Adrenal gland (tissue), 19 donors: ENCODE measurements at regions of chr9 and their contacts with region 1.

Region 1: DNA sequence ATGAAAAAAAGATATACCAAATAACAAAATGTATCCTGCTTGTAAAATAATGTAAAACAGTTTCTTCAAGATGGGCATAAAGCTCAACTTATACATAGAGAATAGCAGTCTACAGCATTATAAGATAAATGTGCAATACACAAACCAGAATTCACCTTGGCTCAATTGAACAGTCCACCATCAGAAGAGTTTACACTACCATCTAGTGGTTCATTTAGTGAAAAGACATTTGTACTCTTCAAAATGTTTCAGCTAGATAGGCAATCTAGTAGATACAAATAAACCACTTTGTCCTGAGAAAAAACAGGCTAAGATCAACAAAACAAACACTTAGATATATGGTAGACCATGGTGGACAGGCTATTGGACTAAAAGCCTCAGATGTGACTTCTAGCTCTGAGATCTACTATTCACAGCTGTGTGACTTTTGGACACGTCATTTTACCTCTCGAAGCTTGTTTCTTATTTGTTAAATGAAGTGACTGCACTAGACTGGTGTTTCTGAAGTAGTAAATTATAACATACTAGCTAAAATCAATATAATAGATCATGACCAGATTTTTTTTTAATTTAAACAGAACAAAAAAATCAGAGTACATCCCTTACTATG is 22.1 kb upstream of the TPD52L3 start:
- DNase-seq: no peak
- H3K4me3 ChIP-seq: no peak overlapping the region
- H3K27ac ChIP-seq: no peak overlapping the region
- H3K4me1 ChIP-seq: no peaks in the 10 kb centered on the region
- H3K27me3 ChIP-seq: no peaks in the 10 kb centered on the region
- CTCF ChIP-seq: peak; percentile 32 to 82 (median 66)
- POLR2A ChIP-seq: no peak

Region 2: DNA sequence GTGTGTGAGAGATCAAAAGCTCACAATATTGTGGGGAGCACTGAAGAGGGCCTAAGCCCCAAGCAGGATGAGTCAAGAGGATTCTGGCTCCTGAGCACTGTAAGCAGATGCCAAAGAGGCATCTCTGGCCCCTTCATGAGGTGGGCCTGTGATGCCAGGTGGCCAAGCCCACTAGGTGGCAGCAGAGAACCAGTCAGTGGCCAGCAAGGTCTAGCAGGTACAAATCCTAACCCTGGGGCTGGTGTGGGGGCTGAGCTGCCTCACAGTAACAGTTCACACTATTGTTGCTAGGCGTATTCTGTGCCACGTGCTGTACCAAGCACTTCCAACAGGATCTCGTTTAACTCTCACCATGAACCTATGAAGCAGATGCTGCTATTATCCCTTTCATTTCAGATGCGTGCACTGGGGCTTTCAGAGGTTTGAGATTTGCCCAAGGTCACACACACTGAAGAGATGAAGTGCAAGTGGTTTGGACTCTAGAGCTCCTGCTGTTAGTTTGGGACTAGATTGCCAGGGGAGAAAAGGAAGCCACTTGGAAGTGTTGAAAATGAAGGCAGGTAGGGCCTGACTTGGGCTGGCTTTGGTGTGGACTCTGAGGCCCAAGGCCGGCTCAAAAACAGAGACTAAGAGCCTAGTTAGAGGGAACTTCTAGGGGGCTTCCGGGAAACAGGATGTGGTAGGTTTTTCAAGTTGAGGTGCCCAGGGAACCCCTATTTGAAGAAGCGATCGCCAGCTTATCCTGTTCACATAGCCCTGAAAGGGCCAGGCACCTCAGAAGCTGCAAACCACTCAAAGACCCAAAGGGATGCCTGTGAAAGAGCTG is 419.7 kb before region 1 on chr9:
- intact Hi-C with region 1: loop called (anchors 10 kb)
- DNase-seq: peak; percentile 71 to 91 (median 77)
- H3K4me3 ChIP-seq: no peak overlapping the region
- H3K27ac ChIP-seq: no peak overlapping the region
- H3K4me1 ChIP-seq: no peaks in the 10 kb centered on the region
- H3K27me3 ChIP-seq: no peaks in the 10 kb centered on the region
- CTCF ChIP-seq: peak; percentile 80 to 96 (median 84)
- POLR2A ChIP-seq: no peak

Region 3: DNA sequence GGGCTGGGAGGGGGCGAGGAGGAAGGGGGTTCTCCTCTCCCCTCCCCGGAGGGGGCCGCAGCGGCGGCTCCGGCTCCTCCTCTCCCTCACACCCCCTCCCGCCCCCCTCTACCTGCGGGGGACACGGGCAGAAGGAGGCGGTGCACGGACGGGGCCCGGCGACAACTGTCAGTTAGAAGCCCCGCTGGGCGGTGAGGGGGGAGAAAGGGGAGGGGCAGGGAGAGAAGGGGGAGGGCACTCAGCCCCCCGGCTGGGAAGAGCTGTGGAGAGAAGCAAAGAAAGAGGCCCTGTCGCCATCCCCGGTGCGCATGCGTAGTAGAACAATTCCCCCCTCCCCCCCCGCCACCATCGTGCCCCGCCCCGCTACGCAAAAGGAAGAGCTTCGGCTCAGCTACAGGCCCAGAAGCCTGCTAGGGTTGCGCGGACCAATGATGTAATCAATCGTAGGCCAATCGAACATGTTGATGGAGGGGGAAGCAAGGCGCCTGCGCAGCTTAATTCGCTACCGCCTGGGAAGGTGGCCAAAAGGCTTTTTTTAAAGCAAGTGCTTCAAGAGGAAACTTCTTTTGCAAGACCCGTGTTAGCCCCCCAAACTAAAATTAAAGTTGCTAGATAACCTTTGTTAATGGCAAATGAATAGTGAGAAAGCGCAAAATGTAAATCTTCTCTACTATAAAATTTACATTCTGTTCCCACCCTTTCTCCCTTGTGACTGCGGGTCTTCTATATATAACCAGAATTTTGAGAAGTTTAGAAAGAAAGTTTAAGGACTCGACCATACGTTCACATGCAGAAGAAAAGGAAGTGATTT is 297.7 kb before region 1 on chr9:
- intact Hi-C with region 1: no loop called
- DNase-seq: peak; percentile 95 to 99 (median 98)
- H3K4me3 ChIP-seq: peak overlapping the region; percentile 74 to 95 (median 91)
- H3K27ac ChIP-seq: peak overlapping the region; percentile 86 to 99 (median 98)
- H3K4me1 ChIP-seq: peaks cover 0 to 52% of the 10 kb centered on the region in 2 donors
- H3K27me3 ChIP-seq: no peaks in the 10 kb centered on the region
- CTCF ChIP-seq: no peak
- POLR2A ChIP-seq: peak in 1 of 2 donors; percentile 51

Region 4: GRCh38 chr9:6055213-6055612 is 250.8 kb before region 1 on chr9:
- intact Hi-C with region 1: loop called (anchors 2 to 5 kb)
- DNase-seq: peak; percentile 24 to 76 (median 66)
- H3K4me3 ChIP-seq: no peak overlapping the region
- H3K27ac ChIP-seq: no peak overlapping the region
- H3K4me1 ChIP-seq: no peaks in the 10 kb centered on the region
- H3K27me3 ChIP-seq: no peaks in the 10 kb centered on the region
- CTCF ChIP-seq: peak; percentile 41 to 90 (median 70)
- POLR2A ChIP-seq: no peak

Region 5: DNA sequence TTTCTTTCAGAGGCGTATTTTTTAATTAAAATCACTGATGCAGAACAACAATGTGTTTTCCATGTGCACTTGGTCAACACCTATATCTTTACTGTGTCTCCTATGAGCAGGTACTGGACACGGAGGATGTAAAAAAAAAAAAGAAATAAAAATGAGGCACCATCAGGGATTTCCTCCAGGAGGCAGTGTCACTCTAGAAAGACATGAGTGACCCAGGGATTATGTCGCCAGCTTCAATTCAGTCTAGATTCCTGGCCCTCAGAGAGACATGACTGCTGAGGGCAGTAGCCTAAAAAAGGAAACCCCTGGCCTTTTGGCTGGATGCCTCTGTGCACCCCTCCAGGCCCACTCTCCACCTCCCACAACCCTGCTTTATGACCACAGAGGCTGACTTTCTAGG is 108.7 kb before region 1 on chr9:
- intact Hi-C with region 1: loop called in 1 of 2 experiments (anchors 10 kb)
- DNase-seq: peak in 1 of 7 donors; percentile 2
- H3K4me3 ChIP-seq: no peak overlapping the region
- H3K27ac ChIP-seq: no peak overlapping the region
- H3K4me1 ChIP-seq: no peaks in the 10 kb centered on the region
- H3K27me3 ChIP-seq: no peaks in the 10 kb centered on the region
- CTCF ChIP-seq: peak in 5 of 6 experiments; percentile 3 to 41 (median 39)
- POLR2A ChIP-seq: no peak